Activated CD8-positive, alpha-beta T cell treated with anti-CD3 and anti-CD28 coated beads, Interleukin-2, amount 10 ng/mL, durations not matched to agents 7 days and 5 days (primary cell): ENCODE measurements at regions of chr3 and their contacts with region 1.

Region 1: GRCh38 chr3:155805802-155806618 is at the start of gene C3orf33:
- DNase-seq: peak; percentile 75
- ATAC-seq: peak; percentile 99
- H3K4me3 Mint-ChIP-seq: peak within 1 kb of the TSS; percentile 81
- H3K27ac Mint-ChIP-seq: peak within 1 kb of the TSS; percentile 80
- H3K4me1 Mint-ChIP-seq: peaks cover 10% of the 10 kb centered on the region
- H3K27me3 Mint-ChIP-seq: peaks cover 14% of the 10 kb centered on the region
- total RNA-seq, gene C3orf33: 0.60 to 1.3 TPM

Region 2: GRCh38 chr3:155184011-155184410 is 622.0 kb before region 1 on chr3:
- CTCF ChIA-PET with region 1: no interaction called
- POLR2A ChIA-PET with region 1: no interaction called
- DNase-seq: no peak
- ATAC-seq: no peak
- H3K4me3 Mint-ChIP-seq: no peak overlapping the region
- H3K27ac Mint-ChIP-seq: peak overlapping the region; percentile 6
- H3K4me1 Mint-ChIP-seq: peaks cover 9% of the 10 kb centered on the region
- H3K27me3 Mint-ChIP-seq: peaks cover 4% of the 10 kb centered on the region

Region 3: GRCh38 chr3:155404486-155404885 is 401.5 kb before region 1 on chr3:
- CTCF ChIA-PET with region 1: no interaction called
- POLR2A ChIA-PET with region 1: no interaction called
- DNase-seq: no peak
- ATAC-seq: no peak
- H3K4me3 Mint-ChIP-seq: no peak overlapping the region
- H3K27ac Mint-ChIP-seq: no peak overlapping the region
- H3K4me1 Mint-ChIP-seq: no peaks in the 10 kb centered on the region
- H3K27me3 Mint-ChIP-seq: no peaks in the 10 kb centered on the region

Region 4: DNA sequence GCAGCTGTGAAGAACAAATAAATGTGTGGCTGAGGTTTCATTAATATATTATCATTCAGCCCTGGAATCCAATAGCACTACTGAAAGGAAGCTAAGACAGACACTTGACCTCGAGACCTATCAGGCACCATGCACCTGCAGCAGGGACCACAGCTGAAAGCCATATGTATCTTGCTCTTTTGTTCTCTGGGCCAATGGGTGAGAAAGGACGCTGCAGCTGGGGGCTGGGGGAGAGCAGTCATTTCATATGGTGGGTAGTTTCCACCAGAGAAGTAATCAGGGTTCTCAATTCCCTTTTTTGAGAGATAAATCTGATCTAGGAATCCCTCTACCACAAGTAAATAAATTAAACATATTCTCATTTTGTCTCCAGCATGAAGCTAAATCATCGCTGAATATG is 286.9 kb before region 1 on chr3:
- CTCF ChIA-PET with region 1: no interaction called
- POLR2A ChIA-PET with region 1: no interaction called
- DNase-seq: no peak
- ATAC-seq: no peak
- H3K4me3 Mint-ChIP-seq: no peak overlapping the region
- H3K27ac Mint-ChIP-seq: no peak overlapping the region
- H3K4me1 Mint-ChIP-seq: no peaks in the 10 kb centered on the region
- H3K27me3 Mint-ChIP-seq: no peaks in the 10 kb centered on the region

Region 5: GRCh38 chr3:155772801-155773200 is 33.2 kb before region 1 on chr3:
- CTCF ChIA-PET with region 1: interaction called, 19 read pairs
- POLR2A ChIA-PET with region 1: no interaction called
- DNase-seq: no peak
- ATAC-seq: no peak
- H3K4me3 Mint-ChIP-seq: no peak overlapping the region
- H3K27ac Mint-ChIP-seq: no peak overlapping the region
- H3K4me1 Mint-ChIP-seq: no peaks in the 10 kb centered on the region
- H3K27me3 Mint-ChIP-seq: no peaks in the 10 kb centered on the region

Region 6: DNA sequence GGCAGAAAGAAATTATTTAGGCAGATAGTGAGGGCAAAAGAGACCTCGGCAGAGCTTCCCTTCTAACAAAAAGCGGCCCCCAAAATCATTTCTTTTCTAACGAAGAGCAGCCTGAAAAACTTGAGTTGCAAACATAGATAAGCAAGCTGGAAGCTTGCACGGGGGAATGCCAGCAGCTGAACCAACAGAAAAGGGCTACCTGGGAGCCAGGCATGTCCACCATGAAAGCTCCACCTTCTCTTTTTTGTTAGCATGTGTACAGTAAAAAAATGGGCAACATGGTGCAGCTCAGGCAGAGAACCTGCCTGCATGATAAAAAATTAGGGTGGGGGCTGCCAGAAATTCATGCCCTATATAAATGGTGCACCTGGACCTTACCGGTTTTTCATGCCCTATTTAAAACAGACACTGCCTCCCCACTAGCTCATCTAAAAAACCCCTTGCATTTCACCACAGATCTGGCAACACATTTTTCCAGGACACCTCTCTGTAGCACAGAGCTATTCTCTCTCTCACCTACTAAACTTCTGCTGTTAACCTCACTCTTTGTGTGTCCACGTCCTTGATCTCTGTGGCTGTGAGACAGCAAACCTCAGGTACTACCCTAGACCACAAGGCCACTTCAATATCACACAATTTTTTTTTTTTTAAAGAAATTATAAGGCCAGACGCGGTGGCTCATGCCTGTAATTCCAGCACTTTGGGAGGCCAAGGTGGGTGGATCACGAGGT is 29.5 kb after region 1 on chr3:
- CTCF ChIA-PET with region 1: interaction called, 20 read pairs
- POLR2A ChIA-PET with region 1: interaction called, 3 read pairs
- DNase-seq: no peak
- ATAC-seq: no peak
- H3K4me3 Mint-ChIP-seq: no peak overlapping the region
- H3K27ac Mint-ChIP-seq: peak overlapping the region; percentile 21
- H3K4me1 Mint-ChIP-seq: peaks cover 6% of the 10 kb centered on the region
- H3K27me3 Mint-ChIP-seq: no peaks in the 10 kb centered on the region

Region 7: DNA sequence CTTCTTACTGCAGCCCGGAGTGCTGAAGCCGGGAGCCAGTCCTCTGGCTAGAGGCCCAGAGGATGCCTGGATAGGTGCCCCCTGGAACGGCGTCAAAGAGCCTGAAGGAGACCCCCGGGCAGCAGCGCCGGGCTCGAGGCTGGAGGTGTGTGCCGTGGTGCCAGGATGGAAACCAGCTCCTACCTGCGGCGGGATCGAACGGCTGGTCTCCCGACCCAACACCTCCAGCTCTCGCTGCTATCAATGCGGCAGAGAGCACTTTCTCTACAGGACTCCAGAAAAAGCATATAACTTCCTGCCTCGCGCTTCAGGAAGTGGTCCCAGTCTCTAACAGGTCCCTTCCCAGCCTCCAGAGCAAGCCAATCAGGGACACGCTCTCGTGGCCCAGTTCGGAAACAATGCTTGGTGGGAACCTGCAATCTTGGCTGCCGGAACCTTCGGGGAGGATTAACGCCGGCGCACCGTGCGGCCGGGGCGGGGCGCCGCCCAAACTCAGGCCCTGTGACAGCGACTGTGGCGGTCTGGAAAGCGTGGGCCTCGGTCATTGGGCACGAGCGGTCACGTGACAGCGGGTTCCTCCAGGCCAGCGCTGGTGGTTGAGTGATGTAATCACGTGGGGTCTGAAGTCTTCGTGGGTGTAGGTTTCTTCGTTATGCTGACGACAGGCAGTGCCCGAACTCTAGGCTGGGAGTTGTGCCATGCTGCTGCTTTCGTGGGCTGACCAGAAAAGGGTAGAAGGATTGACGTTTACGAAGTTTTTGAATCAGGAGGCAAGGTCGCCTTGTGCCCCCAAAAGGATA is 48.3 kb after region 1 on chr3 and contains the start of gene SLC33A1:
- CTCF ChIA-PET with region 1: interaction called, 53 read pairs
- POLR2A ChIA-PET with region 1: interaction called, 21 read pairs
- DNase-seq: peak; percentile 99
- ATAC-seq: peak; percentile 94
- H3K4me3 Mint-ChIP-seq: peak within 1 kb of the TSS; percentile 91
- H3K27ac Mint-ChIP-seq: peak within 1 kb of the TSS; percentile 99
- H3K4me1 Mint-ChIP-seq: peaks cover 32% of the 10 kb centered on the region
- H3K27me3 Mint-ChIP-seq: no peaks in the 10 kb centered on the region
- total RNA-seq, gene SLC33A1: 20.0 to 20.2 TPM

Region 8: DNA sequence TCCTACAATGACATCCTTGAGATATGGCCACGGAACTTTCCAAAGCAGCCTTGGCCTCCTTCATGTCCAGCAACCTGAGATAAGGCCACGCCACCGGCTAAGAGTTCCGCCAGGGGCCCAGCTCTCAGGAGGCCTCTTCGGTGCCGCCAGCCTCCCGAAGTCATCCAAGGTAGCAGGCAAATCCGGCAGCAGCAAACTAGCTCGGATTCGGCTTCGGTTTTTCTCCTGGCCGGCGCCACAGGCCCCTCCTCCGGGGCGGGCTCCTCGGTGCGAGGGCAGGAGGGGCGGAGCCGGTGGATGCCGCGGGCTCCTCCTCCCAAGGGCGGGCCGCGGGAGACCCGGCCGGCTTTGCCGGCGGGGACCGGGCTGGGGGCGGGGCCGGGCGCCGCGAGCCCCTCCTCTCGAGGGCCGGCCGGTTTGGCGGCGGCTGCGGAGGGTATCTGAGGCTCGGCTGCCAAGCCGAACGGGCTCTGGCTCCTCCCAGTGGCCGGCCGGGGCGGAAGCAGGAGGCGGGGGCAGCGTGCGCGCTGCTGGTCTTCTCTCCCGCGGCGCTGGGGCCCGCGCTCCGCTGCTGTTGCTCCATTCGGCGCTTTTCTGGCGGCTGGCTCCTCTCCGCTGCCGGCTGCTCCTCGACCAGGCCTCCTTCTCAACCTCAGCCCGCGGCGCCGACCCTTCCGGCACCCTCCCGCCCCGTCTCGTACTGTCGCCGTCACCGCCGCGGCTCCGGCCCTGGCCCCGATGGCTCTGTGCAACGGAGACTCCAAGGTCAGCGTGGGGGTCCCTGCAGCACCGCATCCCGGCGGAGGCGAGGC is 64.3 kb after region 1 on chr3 and contains the start of gene GMPS:
- CTCF ChIA-PET with region 1: interaction called, 51 read pairs
- POLR2A ChIA-PET with region 1: interaction called, 26 read pairs
- DNase-seq: peak; percentile 95
- ATAC-seq: peak; percentile 93
- H3K4me3 Mint-ChIP-seq: peak within 1 kb of the TSS; percentile 95
- H3K27ac Mint-ChIP-seq: peak within 1 kb of the TSS; percentile 94
- H3K4me1 Mint-ChIP-seq: peaks cover 27% of the 10 kb centered on the region
- H3K27me3 Mint-ChIP-seq: no peaks in the 10 kb centered on the region
- total RNA-seq, gene GMPS: 102 to 109 TPM

Region 9: GRCh38 chr3:155886915-155887314 is 80.9 kb after region 1 on chr3:
- CTCF ChIA-PET with region 1: interaction called, 14 read pairs
- POLR2A ChIA-PET with region 1: no interaction called
- DNase-seq: no peak
- ATAC-seq: no peak
- H3K4me3 Mint-ChIP-seq: no peak overlapping the region
- H3K27ac Mint-ChIP-seq: no peak overlapping the region
- H3K4me1 Mint-ChIP-seq: peaks cover 29% of the 10 kb centered on the region
- H3K27me3 Mint-ChIP-seq: no peaks in the 10 kb centered on the region

Region 10: GRCh38 chr3:155941354-155941753 is 135.3 kb after region 1 on chr3:
- CTCF ChIA-PET with region 1: interaction called, 29 read pairs
- POLR2A ChIA-PET with region 1: no interaction called
- DNase-seq: no peak
- ATAC-seq: no peak
- H3K4me3 Mint-ChIP-seq: no peak overlapping the region
- H3K27ac Mint-ChIP-seq: no peak overlapping the region
- H3K4me1 Mint-ChIP-seq: no peaks in the 10 kb centered on the region
- H3K27me3 Mint-ChIP-seq: no peaks in the 10 kb centered on the region